H1 (cell line): ENCODE measurements at regions of chr1 and their contacts with region 1.

Region 1: DNA sequence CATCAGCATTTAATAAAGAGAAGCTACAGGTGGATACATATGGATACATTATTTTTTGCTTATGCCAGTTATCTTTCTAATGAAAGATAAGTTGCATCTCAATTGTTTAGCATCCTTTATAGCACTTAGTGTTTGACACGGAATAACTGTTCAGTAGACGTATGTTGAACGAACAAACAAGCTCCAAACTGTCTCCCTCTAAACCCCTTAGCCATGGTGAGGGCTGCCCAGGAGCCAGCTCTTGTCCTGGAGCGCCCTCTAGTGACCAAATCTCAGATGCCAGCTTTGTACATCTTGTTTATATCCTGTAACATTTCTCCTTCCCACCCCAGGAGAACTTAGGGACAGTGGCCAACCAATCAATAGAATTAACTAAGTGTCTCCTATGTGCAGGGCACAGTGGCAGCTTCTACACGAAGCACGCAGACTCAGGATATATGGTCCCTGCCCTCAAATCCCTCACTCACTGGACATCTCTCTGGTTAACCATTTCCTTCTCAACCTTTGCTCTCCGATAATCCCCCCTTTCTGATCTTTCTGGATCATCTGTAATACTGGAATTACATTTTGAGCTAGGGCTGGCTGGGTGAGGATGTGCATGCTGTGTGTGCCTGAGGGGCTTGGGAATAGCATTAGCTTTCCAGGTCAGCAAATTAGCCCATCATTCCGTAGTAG is 22.9 kb downstream of the KCNA10 start:
- DNase-seq: peak; percentile 58 to 91
- H3K4me3 ChIP-seq: no peak overlapping the region
- H3K27ac ChIP-seq: no peak overlapping the region
- H3K4me1 ChIP-seq: peaks cover 6 to 11% (median 8%) of the 10 kb centered on the region in 4 experiments; a peak in 6 of 7 replicates
- H3K27me3 ChIP-seq: no peaks in the 10 kb centered on the region
- CTCF ChIP-seq: peak; percentile 62 to 95 (median 93)
- EP300 ChIP-seq: no peak
- POLR2A ChIP-seq: no peak
- RAD21 ChIP-seq: peak; percentile 99 to 100

Region 2: DNA sequence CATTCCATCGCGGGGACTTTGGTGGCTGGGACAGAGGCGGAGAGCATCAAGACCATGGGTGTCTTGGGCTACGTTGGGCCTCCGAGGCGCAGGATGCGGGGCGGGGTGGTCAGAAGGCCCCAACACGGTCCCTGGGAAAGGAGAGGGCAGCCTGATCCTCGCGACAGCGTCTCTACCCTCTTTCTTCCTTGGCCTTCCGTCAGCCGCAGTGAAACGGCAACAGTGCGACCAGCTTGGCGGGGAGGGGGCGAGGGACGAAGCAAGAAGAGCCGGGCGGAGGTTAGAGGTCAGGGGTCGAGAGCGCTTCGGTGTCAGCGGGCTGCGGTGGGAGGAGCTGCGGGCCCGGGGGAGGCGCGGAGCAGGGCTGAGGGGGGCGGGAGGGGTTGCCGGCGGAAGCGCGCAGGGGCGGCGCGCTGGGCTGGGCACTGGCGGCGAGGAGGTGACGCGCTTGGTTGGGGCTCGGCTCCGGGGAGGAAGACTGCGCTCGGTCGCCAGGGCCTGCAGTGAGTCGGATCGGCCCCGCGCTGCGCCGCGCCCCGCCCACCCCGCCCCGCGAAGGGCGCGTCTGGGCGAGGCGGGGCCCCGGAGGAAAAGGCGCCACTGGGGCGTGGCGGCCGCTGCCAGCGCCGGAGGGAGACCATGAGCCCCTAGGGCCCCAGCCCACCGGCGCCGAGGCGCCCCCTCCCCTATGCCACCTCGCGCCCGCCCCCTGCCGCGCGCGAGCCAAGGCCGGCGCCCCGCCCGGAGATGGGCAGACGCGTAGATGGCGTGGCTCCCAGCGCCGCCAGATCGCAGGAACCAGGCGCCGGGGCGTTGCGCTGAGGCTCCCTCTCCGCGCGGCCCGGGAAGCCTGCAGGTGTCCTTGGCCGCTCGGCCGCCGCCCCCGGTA is 286.1 kb before region 1 on chr1 and contains the start of gene KCNC4:
- CTCF ChIA-PET with region 1: interaction called, 50 read pairs
- POLR2A ChIA-PET with region 1: interaction called, 3 read pairs
- DNase-seq: peak; percentile 72 to 85
- H3K4me3 ChIP-seq: peak within 1 kb of the TSS; percentile 41 to 78 (median 62)
- H3K27ac ChIP-seq: no peak within 1 kb of the TSS
- H3K4me1 ChIP-seq: peaks cover 7 to 23% (median 20%) of the 10 kb centered on the region in 4 experiments
- H3K27me3 ChIP-seq: peaks cover 5 to 22% (median 21%) of the 10 kb centered on the region in 4 experiments
- CTCF ChIP-seq: no peak
- EP300 ChIP-seq: peak in 1 of 2 experiments; percentile 85; a peak in 1 of 3 replicates
- POLR2A ChIP-seq: peak in 1 of 2 experiments; percentile 38; a peak in 1 of 3 replicates
- RAD21 ChIP-seq: no peak
- total RNA-seq, gene KCNC4: 11.2 TPM in 2 replicates

Region 3: GRCh38 chr1:110420874-110421793 is 74.9 kb before region 1 on chr1:
- CTCF ChIA-PET with region 1: interaction called, 123 read pairs
- POLR2A ChIA-PET with region 1: no interaction called
- DNase-seq: no peak
- H3K4me3 ChIP-seq: no peak overlapping the region
- H3K27ac ChIP-seq: no peak overlapping the region
- H3K4me1 ChIP-seq: peaks cover 0 to 4% (median 0%) of the 10 kb centered on the region in 4 experiments; a peak in 2 of 7 replicates
- H3K27me3 ChIP-seq: no peaks in the 10 kb centered on the region; a peak in 1 of 7 replicates
- CTCF ChIP-seq: no peak
- EP300 ChIP-seq: no peak
- POLR2A ChIP-seq: no peak
- RAD21 ChIP-seq: no peak

Region 4: DNA sequence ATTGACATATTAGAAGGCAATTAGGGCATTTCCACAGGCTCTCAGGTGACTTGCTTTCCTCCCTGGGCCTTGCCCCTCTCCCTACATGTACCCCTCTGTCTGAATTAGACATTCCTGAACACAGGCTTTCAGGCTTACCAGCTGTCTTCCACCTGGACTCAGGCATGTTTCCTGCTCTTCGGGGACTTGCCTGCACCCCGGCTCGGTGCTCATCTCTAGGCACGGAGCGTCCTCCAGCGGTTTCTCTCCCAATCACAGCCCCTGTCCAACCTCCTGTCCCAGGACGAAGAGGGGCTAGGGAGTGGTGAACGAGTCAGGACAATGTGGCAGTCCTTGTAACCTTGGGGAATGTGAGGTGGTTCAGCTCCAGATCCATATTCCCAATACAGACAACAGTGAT is 40.9 kb before region 1 on chr1:
- CTCF ChIA-PET with region 1: interaction called, 243 read pairs
- POLR2A ChIA-PET with region 1: no interaction called
- DNase-seq: peak in 1 of 2 experiments; percentile 73
- H3K4me3 ChIP-seq: no peak overlapping the region
- H3K27ac ChIP-seq: no peak overlapping the region
- H3K4me1 ChIP-seq: peaks cover 0 to 3% (median 2%) of the 10 kb centered on the region in 4 experiments; a peak in 4 of 7 replicates
- H3K27me3 ChIP-seq: no peaks in the 10 kb centered on the region
- CTCF ChIP-seq: peak; percentile 80 to 91 (median 84)
- EP300 ChIP-seq: no peak
- POLR2A ChIP-seq: no peak
- RAD21 ChIP-seq: peak; percentile 96 to 98

Region 5: DNA sequence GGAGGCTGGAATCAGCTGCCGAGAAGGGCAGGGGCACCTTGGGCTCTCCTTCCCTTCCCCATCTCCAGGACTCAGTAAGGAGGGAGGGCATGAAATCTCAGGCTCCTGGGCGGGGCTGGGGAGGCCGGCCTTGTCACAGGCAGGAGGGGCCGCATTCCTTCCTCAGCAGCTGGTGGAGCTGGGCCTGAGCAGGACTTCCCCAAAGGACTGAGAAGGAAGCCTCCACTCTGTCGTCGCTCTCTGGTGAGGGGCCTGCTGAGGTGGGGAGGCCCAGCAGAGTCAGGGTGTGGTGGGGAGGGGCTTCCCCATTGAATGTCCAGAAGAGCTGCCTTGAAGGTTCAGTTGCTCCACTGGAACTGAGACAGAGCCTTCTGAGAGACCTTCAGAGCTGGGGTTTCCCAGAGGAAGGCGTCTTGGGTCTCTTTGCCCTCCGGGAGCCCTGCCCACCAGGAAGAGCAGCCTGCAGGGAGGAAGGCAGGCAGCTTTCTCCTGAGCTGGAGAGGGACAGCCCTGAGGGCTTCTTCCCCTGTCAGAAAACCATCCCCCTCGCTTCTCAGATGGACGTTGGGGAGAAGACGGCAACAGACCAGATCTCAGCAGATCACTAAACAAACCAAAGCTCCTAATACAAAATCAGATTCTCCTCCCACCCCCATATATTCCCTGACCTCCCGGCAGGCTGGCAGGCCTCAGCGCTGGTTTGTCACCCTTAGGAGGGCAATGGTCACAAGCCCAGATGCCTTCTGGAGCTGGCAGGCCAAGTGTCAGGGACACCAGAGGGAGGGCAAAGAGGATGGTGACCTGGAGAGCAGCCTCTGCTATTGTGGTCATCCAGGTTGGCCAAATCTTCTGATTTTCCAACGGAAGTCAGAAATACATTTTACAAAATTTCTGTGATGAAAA is 12.2 kb after region 1 on chr1:
- CTCF ChIA-PET with region 1: interaction called, 38 read pairs
- POLR2A ChIA-PET with region 1: no interaction called
- DNase-seq: peak in 1 of 2 experiments; percentile 58
- H3K4me3 ChIP-seq: no peak overlapping the region
- H3K27ac ChIP-seq: no peak overlapping the region
- H3K4me1 ChIP-seq: peaks cover 0 to 7% (median 2%) of the 10 kb centered on the region in 4 experiments; a peak in 3 of 7 replicates
- H3K27me3 ChIP-seq: no peaks in the 10 kb centered on the region; a peak in 1 of 7 replicates
- CTCF ChIP-seq: no peak
- EP300 ChIP-seq: no peak
- POLR2A ChIP-seq: no peak
- RAD21 ChIP-seq: no peak

Region 6: DNA sequence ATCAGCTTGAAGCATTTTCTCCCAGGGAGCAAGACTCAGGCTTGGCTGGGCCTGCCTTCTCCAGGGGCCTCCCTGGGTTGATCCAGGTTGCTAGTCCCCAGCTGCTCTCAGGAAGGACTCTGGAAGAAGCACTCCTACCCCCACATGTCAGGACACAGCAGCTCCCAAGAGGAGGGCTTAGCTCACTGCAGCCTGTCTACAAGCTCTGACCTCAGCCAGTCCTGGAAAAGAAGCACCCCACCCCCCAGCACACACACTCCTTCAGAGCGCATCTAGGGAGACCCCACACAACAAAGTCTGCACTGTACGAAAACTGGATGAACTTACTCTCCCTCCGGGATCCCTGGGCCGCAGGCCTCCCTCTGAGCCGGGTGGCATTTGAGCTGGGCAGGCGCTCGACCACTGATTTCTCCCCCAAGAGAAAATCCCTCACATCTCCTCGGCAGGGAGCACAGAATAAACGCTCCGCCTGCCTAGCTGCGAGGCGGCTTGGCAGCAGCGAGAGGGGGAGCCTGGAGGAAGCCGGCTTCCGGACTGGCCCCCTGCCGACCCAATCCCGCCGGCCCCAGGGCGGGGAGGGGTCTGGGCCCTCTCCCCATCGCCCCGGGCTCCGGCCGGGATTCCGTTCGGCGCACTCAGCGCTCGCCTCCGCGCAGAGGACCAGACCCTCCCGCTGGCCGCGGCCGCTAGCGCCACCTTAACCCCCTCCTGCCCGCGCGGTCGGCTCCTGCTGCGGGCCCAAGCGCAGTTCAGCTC is 110.0 kb after region 1 on chr1 and contains the start of gene KCNA2:
- CTCF ChIA-PET with region 1: interaction called, 13 read pairs
- POLR2A ChIA-PET with region 1: no interaction called
- DNase-seq: peak; percentile 50 to 77
- H3K4me3 ChIP-seq: peak within 1 kb of the TSS; percentile 54 to 69 (median 64)
- H3K27ac ChIP-seq: no peak within 1 kb of the TSS
- H3K4me1 ChIP-seq: peaks cover 5 to 15% (median 10%) of the 10 kb centered on the region in 4 experiments
- H3K27me3 ChIP-seq: peaks cover 36 to 78% (median 69%) of the 10 kb centered on the region in 4 experiments
- CTCF ChIP-seq: no peak
- EP300 ChIP-seq: no peak
- POLR2A ChIP-seq: no peak
- RAD21 ChIP-seq: no peak
- total RNA-seq, gene KCNA2: 0.75 and 0.78 TPM in 2 replicates

Region 7: GRCh38 chr1:110627764-110628163 is 131.7 kb after region 1 on chr1:
- CTCF ChIA-PET with region 1: no interaction called
- POLR2A ChIA-PET with region 1: no interaction called
- DNase-seq: no peak
- H3K4me3 ChIP-seq: no peak overlapping the region
- H3K27ac ChIP-seq: no peak overlapping the region
- H3K4me1 ChIP-seq: no peaks in the 10 kb centered on the region
- H3K27me3 ChIP-seq: peaks cover 0 to 9% (median 0%) of the 10 kb centered on the region in 4 experiments; a peak in 2 of 7 replicates
- CTCF ChIP-seq: no peak
- EP300 ChIP-seq: no peak
- POLR2A ChIP-seq: no peak
- RAD21 ChIP-seq: no peak